CD8-positive, alpha-beta T cell (primary cell): ENCODE measurements at regions of chr6 and their contacts with region 1.

Region 1: GRCh38 chr6:27864906-27865849 is 47.0 kb downstream of the OR2B2 start:
- DNase-seq: peak; percentile 37 to 97 (median 56)
- ATAC-seq: peak; percentile 83
- H3K4me3 ChIP-seq: peak overlapping the region; percentile 71 to 79
- H3K4me3 Mint-ChIP-seq: peak overlapping the region; percentile 95
- H3K27ac ChIP-seq: peak overlapping the region; percentile 67 to 83
- H3K27ac Mint-ChIP-seq: peak overlapping the region; percentile 94
- H3K4me1 ChIP-seq: peaks cover 17% of the 10 kb centered on the region
- H3K4me1 Mint-ChIP-seq: peaks cover 38% of the 10 kb centered on the region
- H3K27me3 ChIP-seq: no peaks in the 10 kb centered on the region
- H3K27me3 Mint-ChIP-seq: no peaks in the 10 kb centered on the region
- CTCF ChIP-seq: no peak

Region 2: GRCh38 chr6:27825025-27825793 is 40.0 kb before region 1 on chr6:
- CTCF ChIA-PET with region 1: interaction called, 6 read pairs
- POLR2A ChIA-PET with region 1: interaction called, 746 read pairs
- intact Hi-C with region 1: no loop called
- DNase-seq: peak in 1 of 9 experiments; percentile 45
- ATAC-seq: peak; percentile 6
- H3K4me3 ChIP-seq: peak overlapping the region; percentile 55 to 76
- H3K4me3 Mint-ChIP-seq: peak overlapping the region; percentile 89
- H3K27ac ChIP-seq: peak overlapping the region; percentile 81 to 91
- H3K27ac Mint-ChIP-seq: peak overlapping the region; percentile 99
- H3K4me1 ChIP-seq: peaks cover 24% of the 10 kb centered on the region
- H3K4me1 Mint-ChIP-seq: peaks cover 32% of the 10 kb centered on the region
- H3K27me3 ChIP-seq: no peaks in the 10 kb centered on the region
- H3K27me3 Mint-ChIP-seq: no peaks in the 10 kb centered on the region
- CTCF ChIP-seq: no peak